Uterus (tissue), 4 donors: ENCODE measurements at regions of chr19 and their contacts with region 1.

Region 1: GRCh38 chr19:48618916-48619691 is at the starts of genes RPL18 and SPHK2:
- DNase-seq: peak; percentile 98 to 99
- H3K4me3 ChIP-seq: peak within 1 kb of the TSS; percentile 84 to 88
- H3K27ac ChIP-seq: peak within 1 kb of the TSS; percentile 90 to 98
- H3K4me1 ChIP-seq: peaks cover 8 to 19% of the 10 kb centered on the region in 2 donors
- H3K27me3 ChIP-seq: no peaks in the 10 kb centered on the region
- CTCF ChIP-seq: peak in 3 of 4 experiments; percentile 9 to 31 (median 14)
- POLR2A ChIP-seq: peak; percentile 77 to 93
- total RNA-seq, gene RPL18: 1,515 to 5,795 (median 3,195) TPM
- total RNA-seq, gene SPHK2: 10.0 to 27.2 (median 21.7) TPM

Region 2: DNA sequence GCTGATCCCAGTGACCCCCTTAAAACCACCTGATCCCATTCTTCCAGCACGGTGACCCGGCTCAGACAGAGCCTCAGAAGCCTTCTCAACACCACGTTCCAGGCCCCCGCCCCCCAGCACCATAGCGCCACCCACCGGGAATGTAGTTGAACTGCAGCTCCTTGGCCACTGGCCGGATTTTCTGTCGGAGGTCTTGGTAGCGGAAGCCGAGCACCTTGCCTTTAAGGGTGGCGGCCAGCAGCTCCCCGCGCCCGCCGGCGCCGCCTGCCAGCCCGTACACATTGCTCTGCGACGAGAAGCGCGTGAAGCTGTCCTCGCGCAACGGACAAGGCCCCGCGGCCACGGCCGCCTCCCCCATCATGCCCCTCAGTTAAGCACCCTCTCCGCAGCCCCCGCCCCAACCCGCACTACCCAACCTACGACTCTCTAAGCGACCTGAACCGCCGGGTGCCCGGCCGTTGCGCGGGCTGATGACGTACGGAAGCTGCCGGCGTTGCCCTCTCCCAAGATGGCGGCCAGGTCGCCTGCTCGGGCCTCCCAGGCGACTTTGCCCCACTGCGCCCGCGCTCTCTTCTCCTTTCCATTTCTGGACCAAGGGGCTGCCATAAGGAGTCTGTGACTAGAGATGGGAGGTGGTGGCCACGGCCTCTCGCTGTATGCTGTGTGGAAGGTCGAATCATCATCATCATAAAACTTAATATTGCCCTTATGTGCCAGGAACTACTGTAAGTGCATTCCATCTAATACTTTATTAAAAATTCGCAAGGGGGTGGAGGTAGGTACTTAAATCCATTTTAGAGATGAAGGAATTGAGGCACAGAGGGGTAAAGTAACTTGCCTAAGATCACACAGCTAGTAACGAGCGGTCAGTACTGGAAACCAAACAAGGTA is 1135.1 kb before region 1 on chr19 and contains the start of gene KPTN:
- intact Hi-C with region 1: loop called (anchors 10 kb)
- DNase-seq: peak; percentile 84 to 85
- H3K4me3 ChIP-seq: peak within 1 kb of the TSS; percentile 63 to 65
- H3K27ac ChIP-seq: peak within 1 kb of the TSS; percentile 85 to 91
- H3K4me1 ChIP-seq: no peaks in the 10 kb centered on the region
- H3K27me3 ChIP-seq: no peaks in the 10 kb centered on the region
- CTCF ChIP-seq: peak; percentile 68 to 90 (median 81)
- POLR2A ChIP-seq: peak; percentile 21 to 34
- total RNA-seq, gene KPTN: 5.4 to 9.0 (median 6.4) TPM in 3 of 4 donors, not detected in the other

Region 3: DNA sequence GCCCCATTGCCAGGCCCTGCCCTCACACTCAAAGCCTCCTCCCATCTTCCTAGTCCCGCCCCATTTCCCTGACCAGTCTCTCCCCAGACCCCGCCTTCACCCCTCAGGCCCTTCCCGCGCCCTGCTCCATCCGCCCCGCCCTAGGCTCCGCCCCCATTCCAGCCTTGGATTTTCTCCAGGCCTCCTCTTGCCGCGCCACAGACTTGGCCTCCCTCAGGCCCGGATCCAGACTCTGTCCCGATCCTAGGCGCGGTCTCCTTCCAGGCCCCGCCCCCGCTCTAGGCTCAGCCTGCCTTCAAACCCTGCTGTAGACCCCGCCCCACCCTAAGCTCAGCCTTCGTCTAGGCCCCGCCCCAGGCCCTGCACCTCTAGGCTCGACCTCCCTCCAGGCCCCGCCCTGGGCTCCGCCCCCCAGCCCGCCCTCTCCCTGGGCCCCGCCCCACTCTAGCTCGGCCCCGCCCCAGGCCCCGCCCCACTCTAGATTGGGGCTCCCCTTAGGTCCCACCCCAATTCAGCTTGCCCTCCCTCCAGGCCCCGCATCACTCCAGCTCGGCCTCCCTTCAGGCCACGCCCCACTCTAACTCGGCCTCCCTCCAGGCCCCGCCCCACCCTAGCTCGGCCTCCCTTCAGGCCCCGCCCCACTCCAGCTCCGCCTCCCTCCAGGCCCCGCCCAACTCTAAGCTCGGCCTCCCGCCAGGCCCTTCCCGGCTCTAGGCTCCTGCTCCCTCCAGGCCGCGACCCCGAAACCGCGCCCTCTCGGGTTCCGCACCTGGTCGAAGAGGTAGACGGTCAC is 126.0 kb before region 1 on chr19:
- intact Hi-C with region 1: loop called (anchors 10 kb)
- DNase-seq: peak; percentile 91 to 97
- H3K4me3 ChIP-seq: peak overlapping the region; percentile 41
- H3K27ac ChIP-seq: peak overlapping the region; percentile 71 to 79
- H3K4me1 ChIP-seq: peaks cover 0 to 7% of the 10 kb centered on the region in 2 donors
- H3K27me3 ChIP-seq: no peaks in the 10 kb centered on the region
- CTCF ChIP-seq: peak in 1 of 4 experiments; percentile 13
- POLR2A ChIP-seq: peak; percentile 57 to 78

Region 4: DNA sequence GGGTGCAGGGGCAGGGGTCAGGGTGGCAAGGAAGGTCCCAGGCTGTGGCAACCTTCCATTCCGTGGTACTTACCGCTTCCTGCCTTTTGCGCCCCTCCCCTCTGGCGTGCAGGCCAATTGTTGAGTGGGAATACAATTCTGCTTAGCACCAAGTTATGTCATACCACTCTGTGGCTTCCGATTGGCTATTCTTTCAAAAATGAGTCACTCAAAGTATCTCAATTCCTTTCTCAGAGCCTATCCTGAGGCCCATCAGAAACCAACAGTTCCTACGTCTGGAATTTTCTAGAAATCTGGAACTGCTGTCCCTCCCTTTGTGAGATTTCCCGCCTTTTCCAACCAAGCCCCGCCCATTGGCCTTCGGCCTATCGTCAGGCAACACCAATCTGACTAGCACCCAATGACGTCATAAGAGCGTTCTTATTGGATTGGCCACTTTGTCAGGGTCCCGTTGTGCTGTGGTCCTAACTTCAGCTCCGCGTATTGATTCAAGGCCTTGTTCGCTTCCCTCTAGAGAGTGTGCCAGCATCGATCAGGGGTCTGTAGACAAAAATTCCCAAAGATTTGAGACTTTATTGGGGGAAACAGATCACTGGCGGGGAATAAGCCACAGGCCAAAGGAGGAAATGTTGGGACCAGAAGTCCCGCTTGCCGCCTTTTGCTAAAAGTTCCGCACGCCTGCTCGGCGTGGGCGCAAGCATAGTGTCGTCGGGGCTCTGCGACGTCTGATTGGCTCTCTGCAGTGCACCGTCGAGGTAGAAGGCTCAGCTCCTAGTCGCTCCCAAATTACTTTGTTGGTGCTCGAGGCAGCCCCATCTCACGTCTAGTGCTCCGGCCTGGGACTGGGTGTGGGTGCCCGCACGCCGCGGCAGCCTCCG is 42.0 kb after region 1 on chr19:
- intact Hi-C with region 1: no loop called
- DNase-seq: peak; percentile 87 to 88
- H3K4me3 ChIP-seq: no peak overlapping the region
- H3K27ac ChIP-seq: peak overlapping the region; percentile 22 to 44
- H3K4me1 ChIP-seq: no peaks in the 10 kb centered on the region
- H3K27me3 ChIP-seq: no peaks in the 10 kb centered on the region
- CTCF ChIP-seq: no peak
- POLR2A ChIP-seq: no peak